A673 (cell line): ENCODE measurements at regions of chr3 and their contacts with region 1.

Region 1: DNA sequence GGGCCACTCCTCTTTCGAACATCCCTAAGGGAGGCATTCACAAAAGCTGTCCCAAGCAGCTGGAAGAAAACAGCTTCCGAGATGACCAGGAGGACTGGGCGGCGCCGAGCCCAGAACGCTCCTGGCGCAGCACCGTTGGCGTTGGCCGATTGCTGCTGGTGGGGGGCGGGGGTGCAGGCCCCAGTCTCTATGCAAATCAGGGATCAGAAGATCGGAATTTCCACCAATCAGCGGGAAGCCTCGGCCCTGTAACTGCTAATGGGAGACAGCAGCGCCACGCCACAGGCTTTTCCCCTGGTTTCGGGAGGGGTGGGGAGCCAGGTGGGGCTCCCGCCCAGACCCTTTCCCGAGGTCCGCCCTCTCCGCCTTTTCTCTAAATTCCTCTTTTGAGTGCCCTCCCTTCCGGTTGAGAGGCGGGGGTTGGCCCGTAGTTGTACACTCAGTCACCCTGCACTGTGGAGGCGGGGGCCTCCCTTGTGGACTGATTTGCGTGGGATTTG is 27.0 kb downstream of the HMCES start:
- DNase-seq: peak; percentile 92
- H3K4me3 ChIP-seq: no peak overlapping the region
- H3K27ac ChIP-seq: peak overlapping the region; percentile 4
- H3K4me1 ChIP-seq: peaks cover 13% of the 10 kb centered on the region
- H3K27me3 ChIP-seq: no peaks in the 10 kb centered on the region
- CTCF ChIP-seq: no peak

Region 2: DNA sequence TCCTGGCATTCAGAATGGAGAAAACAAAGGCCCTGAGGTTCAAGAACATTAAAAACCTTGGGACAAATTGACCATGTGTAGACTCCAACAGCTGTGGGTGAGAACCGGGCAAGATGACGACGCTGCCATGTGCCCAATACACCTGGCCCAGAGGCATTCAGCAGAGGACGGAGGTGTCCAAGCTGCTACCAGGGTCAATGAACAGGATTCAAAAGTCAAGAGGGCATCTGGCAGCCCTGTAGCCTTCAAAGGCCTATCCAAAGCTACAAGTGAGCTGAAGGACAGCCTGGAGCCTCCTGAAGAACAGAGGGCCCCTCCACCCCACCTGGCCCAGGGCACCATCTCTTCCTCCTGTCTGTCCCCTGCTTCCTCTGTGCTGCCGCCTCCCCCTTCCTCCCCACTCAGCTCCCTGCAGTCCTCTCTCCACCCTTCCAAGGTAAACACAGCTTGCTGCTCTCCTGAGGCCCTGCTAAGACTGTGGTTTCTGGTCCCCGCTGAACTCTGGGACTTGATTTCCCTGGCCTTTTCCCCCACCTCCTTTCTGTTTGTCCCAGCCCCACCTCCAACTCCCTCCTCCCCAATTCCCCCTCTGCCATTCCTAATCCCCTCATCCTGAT is 30.6 kb after region 1 on chr3:
- CTCF ChIA-PET with region 1: no interaction called
- POLR2A ChIA-PET with region 1: interaction called, 10 read pairs
- intact Hi-C with region 1: no loop called
- DNase-seq: no peak
- H3K4me3 ChIP-seq: no peak overlapping the region
- H3K27ac ChIP-seq: no peak overlapping the region
- H3K4me1 ChIP-seq: no peaks in the 10 kb centered on the region
- H3K27me3 ChIP-seq: no peaks in the 10 kb centered on the region
- CTCF ChIP-seq: no peak